GM12878 (cell line): ENCODE measurements at regions of chr5 and their contacts with region 1.

Region 1: GRCh38 chr5:89065919-89066318 is 182.9 kb upstream of the MEF2C start:
- DNase-seq: peak; percentile 65
- ATAC-seq: peak; percentile 92
- H3K4me3 ChIP-seq: no peak overlapping the region
- H3K27ac ChIP-seq: peak overlapping the region; percentile 83
- H3K4me1 ChIP-seq: peaks cover 10% of the 10 kb centered on the region
- H3K27me3 ChIP-seq: no peaks in the 10 kb centered on the region
- CTCF ChIP-seq: no peak
- EP300 ChIP-seq: peak; percentile 56 to 68; a peak in 2 of 4 replicates
- POLR2A ChIP-seq: 0 out of 2 replicates have a peak, but pooled peaks have one; percentile 19
- RAD21 ChIP-seq: peak; percentile 27; the same call in 1 of the 2 replicates

Region 2: GRCh38 chr5:88776692-88777091 is 289.2 kb before region 1 on chr5:
- CTCF ChIA-PET with region 1: no interaction called
- POLR2A ChIA-PET with region 1: no interaction called
- RAD21 ChIA-PET with region 1: no interaction called
- SMC1A ChIA-PET with region 1: no interaction called
- in situ Hi-C with region 1: no loop called
- intact Hi-C with region 1: no loop called
- DNase-seq: no peak
- ATAC-seq: no peak
- H3K4me3 ChIP-seq: no peak overlapping the region
- H3K27ac ChIP-seq: no peak overlapping the region
- H3K4me1 ChIP-seq: no peaks in the 10 kb centered on the region
- H3K27me3 ChIP-seq: no peaks in the 10 kb centered on the region
- CTCF ChIP-seq: no peak
- EP300 ChIP-seq: no peak
- POLR2A ChIP-seq: 0 out of 2 replicates have a peak, but pooled peaks have one; percentile 39
- RAD21 ChIP-seq: no peak

Region 3: DNA sequence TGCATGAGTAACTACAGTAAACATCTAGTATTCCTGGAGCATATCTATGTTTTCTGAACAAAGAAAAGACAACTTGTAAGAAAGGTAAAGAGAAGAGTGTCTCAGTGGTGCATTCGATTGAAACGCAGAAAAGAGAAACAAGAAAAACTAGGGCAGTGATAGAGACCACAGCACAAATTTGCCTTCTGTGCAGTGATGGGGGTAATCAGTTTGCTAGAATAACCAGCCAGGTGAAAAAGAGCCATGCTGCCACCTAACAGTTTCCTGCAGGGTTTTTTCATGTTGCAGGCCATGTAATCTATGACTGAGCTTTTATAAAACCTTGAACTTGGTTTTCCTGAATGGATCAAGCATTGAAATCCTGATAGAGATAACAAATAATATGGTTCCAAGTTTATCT is 15.4 kb after region 1 on chr5:
- CTCF ChIA-PET with region 1: interaction called, 6 read pairs
- POLR2A ChIA-PET with region 1: interaction called, 7 read pairs
- RAD21 ChIA-PET with region 1: interaction called, 21 read pairs
- SMC1A ChIA-PET with region 1: interaction called, 52 read pairs
- in situ Hi-C with region 1: no loop called
- intact Hi-C with region 1: no loop called
- DNase-seq: peak; percentile 62
- ATAC-seq: peak; percentile 89
- H3K4me3 ChIP-seq: peak overlapping the region; percentile 3; the same call in 1 of the 2 replicates
- H3K27ac ChIP-seq: peak overlapping the region; percentile 55
- H3K4me1 ChIP-seq: peaks cover 11% of the 10 kb centered on the region
- H3K27me3 ChIP-seq: no peaks in the 10 kb centered on the region
- CTCF ChIP-seq: peak in 1 of 3 experiments; percentile 36; a peak in 2 of 6 replicates
- EP300 ChIP-seq: 0 out of 4 replicates have a peak, but pooled peaks of 1 of the 2 experiments have one; percentile 21
- POLR2A ChIP-seq: no peak
- RAD21 ChIP-seq: peak; percentile 54

Region 4: DNA sequence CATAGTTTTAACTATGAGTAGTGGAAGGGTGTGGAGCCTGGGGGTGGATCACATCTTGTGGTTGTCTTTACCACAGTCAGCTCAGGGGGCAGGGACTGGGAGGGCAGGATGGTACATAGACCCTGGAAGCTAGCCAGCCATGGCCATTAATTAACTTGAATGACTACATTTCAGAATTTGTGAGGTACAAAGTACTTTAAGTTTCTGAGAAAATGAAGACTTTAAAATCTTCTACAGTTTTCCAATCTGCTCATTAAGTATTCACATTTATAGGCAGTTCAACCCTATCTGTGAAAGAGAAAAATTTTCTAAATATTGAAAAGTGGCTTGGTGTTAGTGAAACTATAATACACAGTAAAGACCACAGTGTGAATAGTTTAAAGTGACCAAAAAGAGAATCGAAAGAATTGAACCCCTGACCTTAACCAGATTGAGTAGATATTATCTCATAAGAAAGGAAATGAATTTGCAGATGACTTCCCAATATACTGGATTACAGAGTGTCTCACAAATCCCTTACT is 51.3 kb after region 1 on chr5:
- CTCF ChIA-PET with region 1: no interaction called
- POLR2A ChIA-PET with region 1: no interaction called
- RAD21 ChIA-PET with region 1: no interaction called
- SMC1A ChIA-PET with region 1: interaction called, 3 read pairs
- in situ Hi-C with region 1: no loop called
- intact Hi-C with region 1: loop called (anchors 2 kb)
- DNase-seq: peak; percentile 55
- ATAC-seq: peak; percentile 98
- H3K4me3 ChIP-seq: no peak overlapping the region
- H3K27ac ChIP-seq: no peak overlapping the region
- H3K4me1 ChIP-seq: no peaks in the 10 kb centered on the region; the same call in 1 of the 2 replicates
- H3K27me3 ChIP-seq: no peaks in the 10 kb centered on the region
- CTCF ChIP-seq: no peak
- EP300 ChIP-seq: peak; percentile 46 to 47; a peak in 1 of 4 replicates
- POLR2A ChIP-seq: no peak
- RAD21 ChIP-seq: no peak

Region 5: DNA sequence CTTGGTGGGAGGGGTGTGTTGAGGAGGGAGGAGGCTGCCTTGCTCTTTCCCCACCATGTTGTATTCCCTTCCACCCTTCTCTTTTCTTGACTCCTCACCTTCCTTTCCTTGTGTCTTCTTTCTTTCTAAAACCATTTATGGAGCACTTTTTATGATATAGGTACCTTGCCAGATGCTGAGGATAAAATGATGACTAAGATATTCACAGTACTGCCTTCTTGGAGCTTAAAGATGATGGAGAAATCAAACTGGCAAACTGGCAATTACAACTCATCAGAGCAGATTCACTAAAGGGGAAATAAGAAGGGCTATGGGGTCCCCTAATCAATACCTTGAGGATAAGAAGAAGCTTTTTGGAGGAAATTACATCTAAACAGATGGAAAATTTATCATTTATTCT is 90.3 kb after region 1 on chr5:
- CTCF ChIA-PET with region 1: no interaction called
- POLR2A ChIA-PET with region 1: no interaction called
- RAD21 ChIA-PET with region 1: no interaction called
- SMC1A ChIA-PET with region 1: no interaction called
- in situ Hi-C with region 1: no loop called
- intact Hi-C with region 1: no loop called
- DNase-seq: no peak
- ATAC-seq: no peak
- H3K4me3 ChIP-seq: no peak overlapping the region
- H3K27ac ChIP-seq: no peak overlapping the region
- H3K4me1 ChIP-seq: no peaks in the 10 kb centered on the region
- H3K27me3 ChIP-seq: no peaks in the 10 kb centered on the region
- CTCF ChIP-seq: no peak
- EP300 ChIP-seq: no peak
- POLR2A ChIP-seq: no peak
- RAD21 ChIP-seq: no peak

Region 6: GRCh38 chr5:89211836-89212235 is 145.9 kb after region 1 on chr5:
- CTCF ChIA-PET with region 1: no interaction called
- POLR2A ChIA-PET with region 1: no interaction called
- RAD21 ChIA-PET with region 1: no interaction called
- SMC1A ChIA-PET with region 1: no interaction called
- in situ Hi-C with region 1: no loop called
- intact Hi-C with region 1: no loop called
- DNase-seq: no peak
- ATAC-seq: no peak
- H3K4me3 ChIP-seq: no peak overlapping the region
- H3K27ac ChIP-seq: no peak overlapping the region
- H3K4me1 ChIP-seq: no peaks in the 10 kb centered on the region
- H3K27me3 ChIP-seq: no peaks in the 10 kb centered on the region
- CTCF ChIP-seq: no peak
- EP300 ChIP-seq: no peak
- POLR2A ChIP-seq: no peak
- RAD21 ChIP-seq: no peak